B cell (primary cell): ENCODE measurements at regions of chr6 and their contacts with region 1.

Region 1: DNA sequence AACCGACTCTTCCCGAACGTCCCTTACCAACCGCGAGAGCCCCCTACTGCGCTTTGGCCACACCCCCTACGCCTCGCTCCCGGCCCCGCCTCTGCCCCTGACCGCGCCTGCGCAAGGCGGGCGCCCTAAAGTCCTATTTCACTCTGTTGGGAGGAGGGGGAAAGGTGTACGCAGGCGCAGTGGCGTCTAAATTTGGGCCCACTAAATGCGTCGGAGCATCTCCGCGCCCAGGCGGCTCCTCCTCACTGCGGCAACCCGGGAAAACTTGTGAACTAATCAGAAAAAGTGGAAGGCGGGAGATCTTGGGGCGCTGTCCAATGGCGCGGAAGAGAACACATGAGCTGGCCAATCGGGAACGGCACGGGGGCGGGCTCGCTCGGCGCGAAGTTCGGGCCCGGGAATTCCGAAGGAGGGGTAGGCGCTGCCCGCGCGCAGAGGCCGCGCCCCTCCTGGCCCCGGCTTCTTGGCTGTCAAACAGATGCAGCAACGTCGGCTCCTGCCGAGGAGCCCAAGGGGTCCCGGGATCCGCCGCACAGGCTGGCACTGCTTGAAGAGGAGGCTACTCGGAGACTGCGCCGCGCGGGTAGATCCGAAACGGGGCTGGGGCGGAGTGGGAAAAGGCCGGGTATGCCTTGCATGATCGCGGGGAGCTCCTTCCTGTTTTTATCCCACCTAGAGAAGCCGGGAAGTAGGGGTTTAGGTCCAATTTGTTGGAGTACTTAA is at the start of gene TCF19:
- DNase-seq: peak; percentile 99
- ATAC-seq: peak; percentile 91
- H3K4me3 ChIP-seq: peak within 1 kb of the TSS; percentile 1 to 90 (median 88)
- H3K4me3 Mint-ChIP-seq: peak within 1 kb of the TSS; percentile 87
- H3K27ac ChIP-seq: peak within 1 kb of the TSS; percentile 53 to 77
- H3K27ac Mint-ChIP-seq: peak within 1 kb of the TSS; percentile 73
- H3K4me1 ChIP-seq: peaks cover 13 to 22% of the 10 kb centered on the region in 2 donors
- H3K4me1 Mint-ChIP-seq: peaks cover 32% of the 10 kb centered on the region
- H3K27me3 ChIP-seq: no peaks in the 10 kb centered on the region
- H3K27me3 Mint-ChIP-seq: no peaks in the 10 kb centered on the region
- CTCF ChIP-seq: no peak
- total RNA-seq, gene TCF19: 9.8 and 10.4 TPM in 2 replicates

Region 2: GRCh38 chr6:31180502-31180901 is 22.2 kb after region 1 on chr6:
- CTCF ChIA-PET with region 1: no interaction called
- POLR2A ChIA-PET with region 1: interaction called, 4 read pairs
- intact Hi-C with region 1: loop called (anchors 1 kb)
- DNase-seq: peak; percentile 82
- ATAC-seq: peak; percentile 100
- H3K4me3 ChIP-seq: peak overlapping the region in 4 of 5 experiments; percentile 52 to 61 (median 58)
- H3K4me3 Mint-ChIP-seq: peak overlapping the region; percentile 86
- H3K27ac ChIP-seq: peak overlapping the region in 1 of 2 donors; percentile 62
- H3K27ac Mint-ChIP-seq: peak overlapping the region; percentile 56
- H3K4me1 ChIP-seq: peaks cover 0 to 5% of the 10 kb centered on the region in 2 donors
- H3K4me1 Mint-ChIP-seq: peaks cover 9% of the 10 kb centered on the region
- H3K27me3 ChIP-seq: no peaks in the 10 kb centered on the region
- H3K27me3 Mint-ChIP-seq: no peaks in the 10 kb centered on the region
- CTCF ChIP-seq: no peak

Region 3: GRCh38 chr6:31271641-31272357 is 113.5 kb after region 1 on chr6 and contains the start of gene HLA-C:
- CTCF ChIA-PET with region 1: no interaction called
- POLR2A ChIA-PET with region 1: no interaction called
- intact Hi-C with region 1: loop called (anchors 1 kb)
- DNase-seq: peak; percentile 98
- ATAC-seq: peak; percentile 88
- H3K4me3 ChIP-seq: peak within 1 kb of the TSS; percentile 72 to 94 (median 87)
- H3K4me3 Mint-ChIP-seq: peak within 1 kb of the TSS; percentile 98
- H3K27ac ChIP-seq: peak within 1 kb of the TSS; percentile 97 to 98
- H3K27ac Mint-ChIP-seq: peak within 1 kb of the TSS; percentile 100
- H3K4me1 ChIP-seq: peaks cover 33 to 46% of the 10 kb centered on the region in 2 donors
- H3K4me1 Mint-ChIP-seq: peaks cover 64% of the 10 kb centered on the region
- H3K27me3 ChIP-seq: no peaks in the 10 kb centered on the region
- H3K27me3 Mint-ChIP-seq: no peaks in the 10 kb centered on the region
- CTCF ChIP-seq: no peak
- total RNA-seq, gene HLA-C: 972 and 998 TPM in 2 replicates

Region 4: DNA sequence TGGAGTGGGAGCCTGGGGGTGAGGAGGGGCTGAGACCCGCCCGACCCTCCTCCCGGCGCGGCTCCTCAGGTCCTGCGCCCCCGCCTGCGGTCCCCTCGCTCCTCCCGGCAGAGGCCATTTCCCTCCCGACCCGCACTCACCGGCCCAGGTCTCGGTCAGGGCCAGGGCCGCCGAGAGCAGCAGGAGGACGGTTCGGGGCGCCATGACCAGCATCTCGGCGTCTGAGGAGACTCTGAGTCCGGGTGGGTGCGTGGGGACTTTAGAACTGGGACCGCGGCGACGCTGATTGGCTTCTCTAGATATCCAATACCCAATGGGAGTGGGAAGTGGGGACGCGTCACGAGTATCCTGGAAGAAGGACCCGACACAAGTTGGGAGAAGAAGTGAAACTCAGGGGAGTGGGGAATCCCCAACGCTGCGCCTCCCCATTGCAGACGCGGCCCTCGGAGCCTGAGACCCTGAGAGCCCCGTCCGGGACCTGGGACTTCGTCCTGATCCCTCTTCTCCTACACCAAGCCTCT is 198.7 kb after region 1 on chr6 and contains the start of gene HLA-B:
- CTCF ChIA-PET with region 1: no interaction called
- POLR2A ChIA-PET with region 1: interaction called, 3 read pairs
- intact Hi-C with region 1: loop called (anchors 2 kb)
- DNase-seq: peak; percentile 96
- ATAC-seq: peak; percentile 88
- H3K4me3 ChIP-seq: peak within 1 kb of the TSS; percentile 51 to 98 (median 87)
- H3K4me3 Mint-ChIP-seq: peak within 1 kb of the TSS; percentile 99
- H3K27ac ChIP-seq: peak within 1 kb of the TSS; percentile 98 to 100
- H3K27ac Mint-ChIP-seq: peak within 1 kb of the TSS; percentile 100
- H3K4me1 ChIP-seq: peaks cover 43 to 44% of the 10 kb centered on the region in 2 donors
- H3K4me1 Mint-ChIP-seq: peaks cover 55% of the 10 kb centered on the region
- H3K27me3 ChIP-seq: no peaks in the 10 kb centered on the region
- H3K27me3 Mint-ChIP-seq: peaks cover 3% of the 10 kb centered on the region
- CTCF ChIP-seq: no peak
- total RNA-seq, gene HLA-B: 3,910 and 4,028 TPM in 2 replicates

Region 5: GRCh38 chr6:31462964-31463870 is 304.9 kb after region 1 on chr6:
- CTCF ChIA-PET with region 1: no interaction called
- POLR2A ChIA-PET with region 1: no interaction called
- intact Hi-C with region 1: loop called (anchors 10 kb)
- DNase-seq: peak; percentile 97
- ATAC-seq: peak; percentile 96
- H3K4me3 ChIP-seq: peak overlapping the region; percentile 73 to 99 (median 84)
- H3K4me3 Mint-ChIP-seq: peak overlapping the region; percentile 99
- H3K27ac ChIP-seq: peak overlapping the region; percentile 99
- H3K27ac Mint-ChIP-seq: peak overlapping the region; percentile 98
- H3K4me1 ChIP-seq: peaks cover 51 to 55% of the 10 kb centered on the region in 2 donors
- H3K4me1 Mint-ChIP-seq: peaks cover 66% of the 10 kb centered on the region
- H3K27me3 ChIP-seq: peaks cover 0 to 4% (median 0%) of the 10 kb centered on the region in 4 experiments
- H3K27me3 Mint-ChIP-seq: no peaks in the 10 kb centered on the region
- CTCF ChIP-seq: no peak